PC-3 (cell line): ENCODE measurements at regions of chr3 and their contacts with region 1.

Region 1: GRCh38 chr3:196412704-196413103 is 19.5 kb downstream of the UBXN7 start:
- DNase-seq: no peak
- ATAC-seq: no peak
- H3K4me3 ChIP-seq: no peak overlapping the region
- H3K27ac ChIP-seq: no peak overlapping the region
- H3K4me1 ChIP-seq: peaks cover 8% of the 10 kb centered on the region
- H3K27me3 ChIP-seq: no peaks in the 10 kb centered on the region
- CTCF ChIP-seq: no peak

Region 2: DNA sequence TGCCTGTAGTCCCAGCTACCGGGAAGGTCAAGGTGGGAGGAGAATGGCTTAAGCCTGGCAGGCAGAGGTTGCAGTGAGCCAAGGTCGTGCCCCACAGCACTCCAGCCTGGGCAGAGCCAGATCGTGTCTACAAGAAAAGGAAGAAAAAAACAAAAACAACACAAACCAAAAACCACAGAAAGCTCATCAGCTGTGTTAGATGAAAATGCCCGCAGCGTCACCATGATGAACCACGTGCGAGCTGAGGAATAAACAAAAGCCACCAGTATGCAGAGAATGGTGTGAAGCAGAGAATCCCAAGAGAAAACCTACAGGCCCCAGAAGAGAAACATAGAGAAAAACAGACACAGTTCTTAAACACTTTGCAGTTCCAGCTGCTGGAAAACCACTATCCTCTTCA is 54.8 kb before region 1 on chr3:
- CTCF ChIA-PET with region 1: interaction called, 16 read pairs
- POLR2A ChIA-PET with region 1: no interaction called
- intact Hi-C with region 1: no loop called
- DNase-seq: no peak
- ATAC-seq: no peak
- H3K4me3 ChIP-seq: no peak overlapping the region
- H3K27ac ChIP-seq: no peak overlapping the region
- H3K4me1 ChIP-seq: no peaks in the 10 kb centered on the region
- H3K27me3 ChIP-seq: no peaks in the 10 kb centered on the region
- CTCF ChIP-seq: no peak